ENCODE measurements at regions of chr9 and their contacts with region 1.

Region 1: DNA sequence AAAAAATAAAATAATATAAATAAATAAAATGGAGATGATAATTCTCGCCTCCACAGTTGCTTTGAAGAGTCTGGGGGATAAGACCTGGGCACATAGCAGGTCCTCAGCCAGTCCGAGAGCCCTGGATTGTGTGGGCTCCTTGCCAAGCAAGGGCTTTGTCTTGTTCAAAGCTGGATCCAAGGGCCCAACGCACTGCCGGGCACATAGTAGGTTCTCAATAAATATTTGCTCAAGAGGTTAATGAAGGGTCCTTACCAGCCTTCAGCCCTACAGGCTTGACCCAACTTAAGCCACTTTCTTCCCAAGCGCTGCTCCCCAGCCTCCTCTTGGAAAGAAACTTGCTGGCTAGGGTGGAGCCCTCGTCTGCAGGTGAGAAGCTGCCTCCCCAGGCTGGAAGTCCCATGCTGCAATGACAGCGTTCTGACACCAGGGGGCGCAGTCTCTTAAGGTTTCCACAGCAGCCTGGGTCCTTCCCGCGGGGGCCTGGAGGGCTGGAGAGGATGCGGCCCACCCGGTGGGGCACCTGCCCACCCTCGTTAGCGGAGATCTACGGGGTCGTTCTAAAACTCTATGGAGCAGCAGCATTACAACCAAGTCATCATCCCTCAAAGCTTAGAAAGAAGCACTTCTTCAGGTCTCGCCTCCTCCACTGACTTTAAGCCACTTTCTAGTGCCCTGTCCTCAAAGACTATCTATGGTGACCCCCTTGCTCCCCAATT is 115.2 kb downstream of the LHX2 start:
- DNase-seq: peak; percentile 78 to 96
- H3K4me3 ChIP-seq: no peak overlapping the region
- H3K27ac ChIP-seq: no peak overlapping the region
- H3K4me1 ChIP-seq: peaks cover 0 to 12% (median 7%) of the 10 kb centered on the region in 4 experiments; a peak in 6 of 7 replicates
- H3K27me3 ChIP-seq: no peaks in the 10 kb centered on the region; a peak in 2 of 7 replicates
- CTCF ChIP-seq: peak; percentile 92 to 96 (median 96)
- EP300 ChIP-seq: no peak
- POLR2A ChIP-seq: no peak
- RAD21 ChIP-seq: peak; percentile 92 to 96

Region 2: DNA sequence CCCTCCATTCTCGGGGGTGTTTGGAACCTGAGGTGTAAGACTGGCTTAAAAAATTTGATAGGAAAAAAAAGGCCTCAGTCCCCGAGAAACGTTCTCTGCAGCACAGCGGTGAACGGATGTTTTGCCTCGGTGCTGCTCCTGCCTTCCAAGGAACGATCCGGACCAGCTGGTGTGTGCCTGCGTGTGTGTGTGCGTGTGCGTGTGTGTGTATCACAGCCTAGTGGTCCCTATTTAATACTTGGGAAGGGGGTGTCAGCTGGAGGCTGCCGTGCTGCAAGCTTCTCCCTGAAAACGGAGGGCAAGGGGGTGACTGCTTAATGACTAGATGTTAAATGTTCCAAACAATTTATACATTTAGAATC is 38.3 kb before region 1 on chr9:
- CTCF ChIA-PET with region 1: no interaction called
- POLR2A ChIA-PET with region 1: no interaction called
- DNase-seq: no peak
- H3K4me3 ChIP-seq: no peak overlapping the region
- H3K27ac ChIP-seq: no peak overlapping the region
- H3K4me1 ChIP-seq: no peaks in the 10 kb centered on the region
- H3K27me3 ChIP-seq: no peaks in the 10 kb centered on the region
- CTCF ChIP-seq: no peak
- EP300 ChIP-seq: no peak
- POLR2A ChIP-seq: no peak
- RAD21 ChIP-seq: no peak

Region 3: GRCh38 chr9:124110307-124110915 is 16.3 kb before region 1 on chr9:
- CTCF ChIA-PET with region 1: interaction called, 65 read pairs
- POLR2A ChIA-PET with region 1: no interaction called
- DNase-seq: peak in 1 of 2 experiments; percentile 91
- H3K4me3 ChIP-seq: no peak overlapping the region
- H3K27ac ChIP-seq: no peak overlapping the region
- H3K4me1 ChIP-seq: no peaks in the 10 kb centered on the region; a peak in 3 of 7 replicates
- H3K27me3 ChIP-seq: peaks cover 0 to 2% (median 0%) of the 10 kb centered on the region in 4 experiments; a peak in 1 of 7 replicates
- CTCF ChIP-seq: no peak
- EP300 ChIP-seq: no peak; a peak in 1 of 3 replicates
- POLR2A ChIP-seq: no peak
- RAD21 ChIP-seq: no peak; a peak in 1 of 4 replicates

Region 4: DNA sequence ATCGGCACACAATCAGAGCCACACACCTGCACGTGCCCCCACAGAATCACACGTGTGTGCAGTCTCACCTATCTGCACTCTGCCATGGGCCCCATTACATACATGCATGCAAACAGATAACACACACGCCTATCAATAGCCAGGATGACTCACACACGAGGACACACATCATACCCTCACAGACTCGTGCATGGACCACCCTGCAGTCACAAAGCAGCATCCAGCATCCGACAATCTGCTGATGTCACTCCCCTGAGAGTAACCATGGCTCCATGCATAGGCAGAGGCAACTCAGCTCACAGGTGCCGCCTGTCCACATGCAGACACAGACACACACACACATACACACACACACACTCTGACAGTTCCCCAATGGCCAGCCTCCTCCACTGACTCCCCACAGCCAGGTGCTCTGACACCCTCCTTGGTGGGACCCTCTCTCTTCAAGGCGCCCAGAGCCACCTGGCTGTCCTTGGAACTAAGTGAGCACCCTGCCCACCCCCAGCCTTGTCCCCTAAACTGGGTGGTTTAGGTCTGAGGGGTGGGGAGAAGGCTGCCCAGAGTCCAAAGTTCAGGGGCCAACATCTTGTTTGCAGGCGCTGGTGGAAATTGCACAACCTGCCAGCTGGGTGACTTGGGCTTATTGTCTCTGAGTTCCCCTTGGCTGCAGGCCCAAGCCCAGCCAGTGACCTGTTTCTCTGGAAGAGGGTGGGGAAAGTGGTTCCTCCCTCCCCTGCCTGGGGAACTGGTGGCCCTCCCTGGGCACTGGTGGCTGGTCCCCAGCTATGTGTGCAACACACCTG is 96.4 kb after region 1 on chr9:
- CTCF ChIA-PET with region 1: interaction called, 11 read pairs
- POLR2A ChIA-PET with region 1: no interaction called
- DNase-seq: no peak
- H3K4me3 ChIP-seq: no peak overlapping the region
- H3K27ac ChIP-seq: no peak overlapping the region
- H3K4me1 ChIP-seq: no peaks in the 10 kb centered on the region
- H3K27me3 ChIP-seq: no peaks in the 10 kb centered on the region
- CTCF ChIP-seq: no peak
- EP300 ChIP-seq: no peak
- POLR2A ChIP-seq: no peak
- RAD21 ChIP-seq: no peak

Region 5: DNA sequence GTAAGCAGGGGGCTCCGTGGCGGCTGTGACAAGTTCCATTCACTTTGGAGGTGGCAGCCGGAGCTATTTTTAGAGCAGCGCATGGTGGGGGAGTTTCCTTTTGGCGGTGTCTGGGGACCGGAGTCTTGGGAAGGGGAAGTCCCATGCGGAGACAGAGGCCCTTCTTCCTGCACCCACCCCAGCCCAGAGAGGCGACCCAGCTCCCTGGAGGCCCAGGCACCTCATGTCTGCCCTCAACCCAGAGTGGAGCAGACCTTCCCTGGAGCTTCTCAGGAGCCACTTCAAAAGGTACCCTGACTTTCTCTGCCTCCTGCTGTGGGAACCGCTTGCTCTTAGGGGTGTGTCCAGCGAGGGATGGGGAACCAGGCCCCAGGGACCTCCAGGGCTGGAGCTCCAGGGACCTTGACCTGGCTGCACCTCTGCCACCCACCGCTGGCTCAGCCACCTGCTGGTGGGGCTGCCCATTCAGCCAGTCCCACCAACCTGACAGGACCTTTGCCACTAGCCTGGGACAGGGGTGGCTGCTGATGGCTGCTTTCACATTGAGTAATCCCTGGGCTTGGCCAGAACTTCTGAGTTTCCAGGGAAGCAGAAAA is 165.2 kb after region 1 on chr9:
- CTCF ChIA-PET with region 1: interaction called, 37 read pairs
- POLR2A ChIA-PET with region 1: no interaction called
- DNase-seq: no peak
- H3K4me3 ChIP-seq: no peak overlapping the region
- H3K27ac ChIP-seq: no peak overlapping the region
- H3K4me1 ChIP-seq: peaks cover 0 to 14% (median 3%) of the 10 kb centered on the region in 4 experiments; a peak in 5 of 7 replicates
- H3K27me3 ChIP-seq: no peaks in the 10 kb centered on the region
- CTCF ChIP-seq: no peak
- EP300 ChIP-seq: no peak
- POLR2A ChIP-seq: no peak
- RAD21 ChIP-seq: no peak

Region 6: DNA sequence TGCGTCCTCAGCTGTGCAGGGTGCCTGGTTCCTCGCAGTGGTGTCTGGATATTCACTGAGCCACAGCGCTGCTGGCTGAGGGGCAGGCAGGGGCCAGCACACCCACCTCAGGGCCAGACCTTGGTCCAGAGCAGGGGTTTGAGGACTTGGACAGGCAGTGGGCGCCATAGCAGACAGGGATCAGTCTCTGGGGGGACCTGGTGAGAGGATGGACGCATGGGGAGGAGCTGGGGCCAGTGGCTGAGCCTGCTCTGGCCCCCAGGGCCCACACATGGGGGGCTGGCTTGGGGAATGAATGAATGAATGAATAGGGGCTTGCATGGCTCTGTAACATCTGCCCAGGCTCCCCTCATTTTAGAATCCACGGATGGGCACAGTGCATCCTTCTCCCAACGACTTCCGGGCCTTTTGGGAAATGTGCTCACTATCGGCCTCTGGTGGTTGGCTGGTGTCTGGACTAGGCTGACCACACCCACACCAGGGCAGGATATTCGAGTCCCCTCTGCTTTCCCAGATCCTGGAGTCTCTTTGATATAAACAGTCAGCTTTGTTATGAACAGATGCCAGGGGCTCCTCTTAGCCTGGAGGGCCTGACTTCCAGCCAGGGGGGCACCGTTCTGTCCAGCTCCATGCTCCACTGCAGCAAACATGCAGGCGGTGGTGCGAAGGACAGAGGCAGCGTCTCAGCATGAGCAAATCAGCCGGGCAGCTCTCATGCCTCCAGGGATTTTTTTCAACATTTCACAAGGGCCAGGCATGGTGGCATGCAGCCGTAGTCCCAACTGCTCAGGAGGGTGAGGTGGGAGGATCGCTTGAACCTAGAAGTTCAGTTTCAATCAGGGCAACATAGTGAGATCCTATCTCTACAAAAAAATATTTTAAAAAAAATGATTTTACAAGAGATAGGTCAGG is 193.6 kb after region 1 on chr9:
- CTCF ChIA-PET with region 1: interaction called, 31 read pairs
- POLR2A ChIA-PET with region 1: interaction called, 3 read pairs
- DNase-seq: peak; percentile 47 to 93
- H3K4me3 ChIP-seq: no peak overlapping the region
- H3K27ac ChIP-seq: no peak overlapping the region
- H3K4me1 ChIP-seq: peaks cover 0 to 1% (median 0%) of the 10 kb centered on the region in 4 experiments; a peak in 1 of 7 replicates
- H3K27me3 ChIP-seq: no peaks in the 10 kb centered on the region
- CTCF ChIP-seq: peak in 2 of 3 experiments; percentile 81 to 96; a peak in 3 of 4 replicates
- EP300 ChIP-seq: no peak
- POLR2A ChIP-seq: no peak
- RAD21 ChIP-seq: peak; percentile 62 to 74

Measured in H1 (cell line).